Ovary (tissue), 10 donors: ENCODE measurements at regions of chr10 and their contacts with region 1.

Region 1: DNA sequence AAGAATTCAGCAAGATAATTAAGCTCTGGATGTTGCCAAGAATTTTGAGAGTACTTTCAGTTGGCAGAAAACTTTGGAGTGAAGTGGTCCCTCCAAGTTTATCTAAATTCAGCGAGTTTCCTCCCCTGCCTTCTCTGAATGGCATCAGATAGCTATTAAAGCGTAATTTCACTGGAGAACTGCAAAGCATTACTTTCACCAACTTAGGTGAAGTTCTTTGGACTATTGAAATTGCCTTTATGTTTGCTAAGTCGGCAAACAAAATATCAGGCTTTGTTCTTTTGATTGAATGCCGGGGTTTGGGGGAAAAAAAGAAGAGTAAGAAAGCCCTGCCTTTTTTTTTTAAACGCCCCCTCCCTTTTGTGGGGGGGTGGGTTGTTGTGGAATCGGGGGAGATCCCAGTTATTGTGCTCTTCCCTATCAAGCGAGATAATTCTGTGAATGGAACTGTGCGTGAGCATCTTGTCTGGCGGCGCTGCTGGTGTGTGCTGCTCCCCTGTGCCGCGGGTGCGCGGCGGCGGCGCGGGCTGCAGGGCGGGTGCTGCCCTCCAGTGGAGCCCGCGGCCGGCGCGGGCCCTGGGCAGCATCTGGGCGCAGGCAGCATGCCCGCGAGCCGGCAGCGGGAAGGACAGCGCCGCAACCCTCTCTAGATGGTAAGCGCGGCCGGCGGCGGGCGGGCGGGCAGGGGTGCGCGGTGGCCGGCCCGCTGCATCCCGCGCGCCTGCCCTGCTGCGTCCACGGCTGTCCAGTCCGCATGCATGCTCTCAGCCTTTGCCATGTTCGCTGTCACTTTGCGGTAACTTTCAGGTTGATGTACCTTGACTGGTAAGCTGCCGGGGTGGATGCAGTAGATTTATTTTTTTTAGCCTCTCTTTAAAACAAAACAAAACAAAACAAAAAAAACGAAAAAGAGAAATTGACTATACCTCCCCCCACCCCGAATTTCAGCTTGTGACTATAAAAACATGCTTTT is 176.5 kb downstream of the TCF7L2 start:
- DNase-seq: peak; percentile 59 to 82 (median 74)
- H3K4me3 ChIP-seq: peak overlapping the region; percentile 27
- H3K27ac ChIP-seq: no peak overlapping the region
- H3K4me1 ChIP-seq: peaks cover 5% of the 10 kb centered on the region
- H3K27me3 ChIP-seq: no peaks in the 10 kb centered on the region
- CTCF ChIP-seq: peak; percentile 51 to 66 (median 64)
- EP300 ChIP-seq: no peak
- POLR2A ChIP-seq: no peak

Region 2: GRCh38 chr10:112721080-112721698 is 405.3 kb before region 1 on chr10:
- intact Hi-C with region 1: loop called in 2 of 4 experiments (anchors 10 kb)
- DNase-seq: no peak
- H3K4me3 ChIP-seq: no peak overlapping the region
- H3K27ac ChIP-seq: no peak overlapping the region
- H3K4me1 ChIP-seq: peaks cover 2% of the 10 kb centered on the region
- H3K27me3 ChIP-seq: no peaks in the 10 kb centered on the region
- CTCF ChIP-seq: peak; percentile 19 to 64 (median 26)
- EP300 ChIP-seq: no peak
- POLR2A ChIP-seq: no peak

Region 3: DNA sequence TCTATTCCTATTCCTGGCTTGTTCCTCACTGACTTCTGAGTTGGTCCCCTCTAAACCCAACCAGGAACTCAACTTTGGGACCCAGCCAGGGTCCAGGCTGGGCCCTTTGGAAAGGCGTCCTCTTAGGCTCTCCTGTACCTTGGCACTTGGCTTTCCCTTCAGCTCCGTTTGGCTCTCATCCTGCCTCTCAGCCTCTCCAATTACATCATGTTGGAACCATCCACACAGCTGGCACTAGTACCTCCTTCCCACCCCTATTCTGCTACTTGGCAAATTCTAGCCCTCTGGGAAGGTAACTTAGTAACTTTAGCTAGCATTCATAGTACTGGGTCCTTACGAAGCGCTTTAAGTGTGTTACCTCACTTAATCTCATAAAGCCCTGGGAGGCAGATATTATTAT is 221.0 kb after region 1 on chr10:
- intact Hi-C with region 1: no loop called
- DNase-seq: no peak
- H3K4me3 ChIP-seq: no peak overlapping the region
- H3K27ac ChIP-seq: no peak overlapping the region
- H3K4me1 ChIP-seq: no peaks in the 10 kb centered on the region
- H3K27me3 ChIP-seq: no peaks in the 10 kb centered on the region
- CTCF ChIP-seq: no peak
- EP300 ChIP-seq: no peak
- POLR2A ChIP-seq: no peak

Region 4: GRCh38 chr10:113626809-113627370 is 500.4 kb after region 1 on chr10:
- intact Hi-C with region 1: no loop called
- DNase-seq: no peak
- H3K4me3 ChIP-seq: no peak overlapping the region
- H3K27ac ChIP-seq: no peak overlapping the region
- H3K4me1 ChIP-seq: no peaks in the 10 kb centered on the region
- H3K27me3 ChIP-seq: no peaks in the 10 kb centered on the region
- CTCF ChIP-seq: no peak
- EP300 ChIP-seq: no peak
- POLR2A ChIP-seq: no peak